ENCODE measurements at regions of chr13 and their contacts with region 1.

Region 1: DNA sequence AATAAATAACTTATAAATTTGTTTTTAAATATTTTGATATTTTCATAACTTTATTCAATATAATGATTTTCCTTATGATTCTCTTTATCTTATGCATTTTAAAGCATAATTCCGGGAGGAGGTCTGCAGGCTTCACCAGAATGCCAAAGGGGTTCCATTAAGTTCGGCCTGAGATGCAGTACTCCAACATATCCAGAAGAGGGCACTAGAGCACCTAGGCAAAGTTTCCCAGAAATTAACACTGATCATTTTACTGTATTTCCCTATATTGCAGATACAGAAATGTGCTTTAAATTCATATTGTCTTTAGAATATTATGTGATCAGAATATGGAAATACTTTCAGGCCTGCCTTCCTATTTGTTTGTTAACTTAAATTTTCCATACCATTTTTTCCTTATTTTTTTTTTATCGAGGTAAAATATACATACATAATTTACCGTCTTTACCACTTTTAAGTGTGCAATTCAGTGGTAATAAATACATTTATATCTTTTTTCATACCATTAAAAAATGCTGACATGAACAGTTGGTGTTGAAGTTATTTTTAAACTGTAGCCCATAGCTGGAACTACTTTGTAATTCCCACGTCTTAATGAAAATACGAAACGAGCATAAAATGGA is 58.9 kb upstream of the TM9SF2 start:
- DNase-seq: peak; percentile 39
- ATAC-seq: peak; percentile 59
- H3K4me3 ChIP-seq: no peak overlapping the region
- H3K27ac ChIP-seq: no peak overlapping the region
- H3K4me1 ChIP-seq: peaks cover 3 to 7% of the 10 kb centered on the region in 2 experiments; a peak in 2 of 4 replicates
- H3K27me3 ChIP-seq: no peaks in the 10 kb centered on the region
- CTCF ChIP-seq: peak; percentile 67 to 82 (median 82)
- POLR2A ChIP-seq: no peak
- RAD21 ChIP-seq: peak; percentile 88

Region 2: DNA sequence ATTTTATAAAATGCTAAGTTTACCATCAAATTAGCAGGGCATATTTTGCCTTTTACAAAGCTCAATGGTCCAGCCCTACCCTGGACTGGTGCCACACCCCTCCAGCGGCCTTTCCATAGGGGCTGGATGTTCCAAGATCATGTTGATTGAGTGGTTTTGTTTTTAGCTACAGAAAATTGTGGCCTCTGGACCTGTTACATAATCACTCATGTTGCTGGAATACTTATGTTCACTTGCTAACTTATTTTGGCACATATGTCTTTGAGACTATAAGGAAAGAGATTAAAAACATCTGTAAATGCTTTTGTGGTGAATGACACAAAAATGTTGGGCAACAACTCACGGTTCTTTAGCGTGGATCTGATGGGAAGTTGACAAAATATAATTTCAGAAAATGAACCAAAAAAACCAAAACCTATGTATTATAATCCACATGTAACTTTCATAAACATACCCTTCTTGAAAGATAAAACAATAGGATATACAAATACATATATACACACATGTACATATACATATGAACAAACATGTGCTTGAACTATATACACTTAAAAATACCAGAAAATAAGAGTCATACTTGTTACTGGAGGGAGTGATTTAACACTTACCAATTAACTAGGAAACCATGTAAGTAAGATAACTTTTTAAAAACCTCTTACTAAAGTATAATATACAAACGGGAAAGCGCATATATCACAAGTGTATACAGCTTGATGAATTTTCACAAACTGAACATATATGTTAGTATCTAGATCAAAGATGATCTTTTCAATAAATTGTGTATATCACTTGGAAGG is 643.3 kb before region 1 on chr13:
- CTCF ChIA-PET with region 1: no interaction called
- POLR2A ChIA-PET with region 1: no interaction called
- RAD21 ChIA-PET with region 1: no interaction called
- intact Hi-C with region 1: no loop called
- DNase-seq: no peak
- ATAC-seq: no peak
- H3K4me3 ChIP-seq: no peak overlapping the region
- H3K27ac ChIP-seq: no peak overlapping the region
- H3K4me1 ChIP-seq: no peaks in the 10 kb centered on the region
- H3K27me3 ChIP-seq: no peaks in the 10 kb centered on the region
- CTCF ChIP-seq: no peak
- POLR2A ChIP-seq: no peak
- RAD21 ChIP-seq: no peak

Region 3: DNA sequence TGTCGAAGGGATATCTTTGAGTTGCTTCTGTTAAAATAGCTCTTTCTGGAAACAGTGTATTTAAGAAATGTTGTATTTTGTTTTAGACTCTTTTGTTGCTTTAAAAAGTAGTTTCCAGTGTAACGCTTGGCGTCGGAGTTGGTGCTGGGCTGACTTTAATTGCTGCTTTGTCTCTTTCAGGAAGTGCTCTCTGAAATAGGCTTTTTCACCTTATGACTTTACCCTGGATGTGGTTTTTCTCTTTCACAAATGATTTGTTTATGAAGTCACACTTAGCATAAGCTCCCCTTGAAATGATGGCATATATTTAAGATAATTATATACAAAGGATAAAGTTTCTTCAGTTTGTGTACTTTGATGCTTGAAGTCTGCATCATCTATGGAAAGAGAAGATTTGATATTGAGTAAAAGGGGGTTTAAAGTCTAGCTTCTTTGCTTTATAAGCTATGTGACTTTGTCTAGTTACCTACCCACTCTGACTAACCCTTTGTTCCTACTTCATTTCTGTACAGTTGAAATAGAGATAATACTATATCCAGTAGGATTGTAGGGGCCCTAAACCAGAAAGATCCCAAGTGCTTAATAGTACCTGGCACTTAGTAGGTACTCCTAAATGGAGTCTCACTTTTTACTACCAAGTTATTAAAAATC is 184.0 kb before region 1 on chr13 and contains the start of gene GPR18:
- CTCF ChIA-PET with region 1: no interaction called
- POLR2A ChIA-PET with region 1: no interaction called
- RAD21 ChIA-PET with region 1: no interaction called
- intact Hi-C with region 1: no loop called
- DNase-seq: no peak
- ATAC-seq: no peak
- H3K4me3 ChIP-seq: no peak within 1 kb of the TSS
- H3K27ac ChIP-seq: no peak within 1 kb of the TSS
- H3K4me1 ChIP-seq: no peaks in the 10 kb centered on the region
- H3K27me3 ChIP-seq: no peaks in the 10 kb centered on the region
- CTCF ChIP-seq: no peak
- POLR2A ChIP-seq: no peak
- RAD21 ChIP-seq: no peak
- total RNA-seq, gene GPR18: not detected

Region 4: GRCh38 chr13:99501184-99501847 is 58.9 kb after region 1 on chr13 and contains the start of gene TM9SF2:
- CTCF ChIA-PET with region 1: interaction called, 4 read pairs
- POLR2A ChIA-PET with region 1: no interaction called
- RAD21 ChIA-PET with region 1: no interaction called
- intact Hi-C with region 1: loop called (anchors 5 kb)
- DNase-seq: peak; percentile 95
- ATAC-seq: peak; percentile 73
- H3K4me3 ChIP-seq: peak within 1 kb of the TSS; percentile 91 to 92
- H3K27ac ChIP-seq: peak within 1 kb of the TSS; percentile 49
- H3K4me1 ChIP-seq: peaks cover 34 to 70% of the 10 kb centered on the region in 2 experiments
- H3K27me3 ChIP-seq: no peaks in the 10 kb centered on the region
- CTCF ChIP-seq: no peak
- POLR2A ChIP-seq: peak; percentile 50
- RAD21 ChIP-seq: no peak
- total RNA-seq, gene TM9SF2: 77.8 TPM

Region 5: GRCh38 chr13:99617474-99618255 is 175.3 kb after region 1 on chr13:
- CTCF ChIA-PET with region 1: no interaction called
- POLR2A ChIA-PET with region 1: no interaction called
- RAD21 ChIA-PET with region 1: no interaction called
- intact Hi-C with region 1: loop called (anchors 5 kb)
- DNase-seq: peak; percentile 18
- ATAC-seq: peak; percentile 83
- H3K4me3 ChIP-seq: no peak overlapping the region
- H3K27ac ChIP-seq: no peak overlapping the region
- H3K4me1 ChIP-seq: peaks cover 0 to 6% of the 10 kb centered on the region in 2 experiments; a peak in 1 of 4 replicates
- H3K27me3 ChIP-seq: no peaks in the 10 kb centered on the region
- CTCF ChIP-seq: peak; percentile 55 to 87 (median 79); a peak in 5 of 6 replicates
- POLR2A ChIP-seq: no peak
- RAD21 ChIP-seq: peak; percentile 79

Measured in HCT116 (cell line).